Activated B cell treated with CpG ODN at 0.5 μM for 24 hours (primary cell): ENCODE measurements at regions of chr22 and their contacts with region 1.

Region 1: GRCh38 chr22:38569972-38570778 is at the start of gene DMC1:
- DNase-seq: peak; percentile 89
- ATAC-seq: peak; percentile 97
- H3K4me3 Mint-ChIP-seq: peak within 1 kb of the TSS; percentile 82
- H3K27ac Mint-ChIP-seq: peak within 1 kb of the TSS; percentile 65
- H3K4me1 Mint-ChIP-seq: peaks cover 17% of the 10 kb centered on the region
- H3K27me3 Mint-ChIP-seq: no peaks in the 10 kb centered on the region
- CTCF ChIP-seq: no peak
- total RNA-seq, gene DMC1: 0.54 and 0.91 TPM in 2 replicates

Region 2: DNA sequence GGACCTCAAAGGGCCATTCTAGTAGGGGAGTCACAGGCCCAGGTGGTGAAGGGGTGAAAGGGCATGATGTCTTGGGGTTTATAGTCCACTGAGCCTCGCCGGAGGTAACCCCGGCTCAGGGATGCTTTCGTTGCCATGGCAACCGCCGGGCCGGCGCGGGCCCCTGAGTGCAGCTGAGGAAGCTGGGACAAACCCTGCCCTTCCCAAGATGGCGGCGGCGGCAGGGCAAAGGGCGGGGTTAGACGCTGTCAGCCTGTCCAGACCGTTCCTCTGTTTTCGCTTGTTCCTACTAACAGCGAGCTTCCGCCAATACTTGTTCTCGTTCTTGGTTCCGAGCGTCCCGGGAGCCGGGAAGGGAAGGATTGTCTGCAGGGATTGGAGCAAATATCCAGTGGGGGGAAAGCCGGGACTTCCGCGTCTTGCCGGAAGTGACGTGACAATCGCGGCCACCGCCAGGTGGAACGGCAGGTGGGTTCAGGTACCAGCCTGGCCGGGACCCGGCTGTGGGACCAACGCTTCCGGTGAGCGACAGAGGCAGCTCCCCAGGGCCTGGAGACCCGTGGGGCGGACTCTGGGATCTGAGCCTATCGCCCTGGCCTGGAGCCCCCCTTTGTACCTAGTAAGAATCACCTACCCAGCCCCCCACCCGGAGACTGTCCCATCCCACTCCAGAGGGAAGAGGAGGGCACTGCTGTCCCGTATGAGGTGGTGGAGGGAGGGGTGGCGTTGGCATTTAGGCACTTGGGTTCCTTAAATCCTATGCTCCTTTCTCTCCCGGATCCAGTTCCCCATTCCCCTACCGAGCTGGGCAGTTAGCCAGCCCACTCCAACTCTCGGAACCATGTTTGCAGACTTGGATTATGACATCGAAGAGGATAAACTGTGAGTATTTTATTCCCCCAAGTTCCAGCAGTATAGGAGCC is 512.9 kb before region 1 on chr22 and contains the start of gene PICK1:
- CTCF ChIA-PET with region 1: interaction called, 77 read pairs
- POLR2A ChIA-PET with region 1: interaction called, 8 read pairs
- intact Hi-C with region 1: loop called (anchors 1 kb)
- DNase-seq: peak; percentile 75
- ATAC-seq: peak; percentile 78
- H3K4me3 Mint-ChIP-seq: peak within 1 kb of the TSS; percentile 98
- H3K27ac Mint-ChIP-seq: peak within 1 kb of the TSS; percentile 97
- H3K4me1 Mint-ChIP-seq: peaks cover 19% of the 10 kb centered on the region
- H3K27me3 Mint-ChIP-seq: peaks cover 7% of the 10 kb centered on the region
- CTCF ChIP-seq: no peak
- total RNA-seq, gene PICK1: 21.5 and 25.5 TPM in 2 replicates

Region 3: DNA sequence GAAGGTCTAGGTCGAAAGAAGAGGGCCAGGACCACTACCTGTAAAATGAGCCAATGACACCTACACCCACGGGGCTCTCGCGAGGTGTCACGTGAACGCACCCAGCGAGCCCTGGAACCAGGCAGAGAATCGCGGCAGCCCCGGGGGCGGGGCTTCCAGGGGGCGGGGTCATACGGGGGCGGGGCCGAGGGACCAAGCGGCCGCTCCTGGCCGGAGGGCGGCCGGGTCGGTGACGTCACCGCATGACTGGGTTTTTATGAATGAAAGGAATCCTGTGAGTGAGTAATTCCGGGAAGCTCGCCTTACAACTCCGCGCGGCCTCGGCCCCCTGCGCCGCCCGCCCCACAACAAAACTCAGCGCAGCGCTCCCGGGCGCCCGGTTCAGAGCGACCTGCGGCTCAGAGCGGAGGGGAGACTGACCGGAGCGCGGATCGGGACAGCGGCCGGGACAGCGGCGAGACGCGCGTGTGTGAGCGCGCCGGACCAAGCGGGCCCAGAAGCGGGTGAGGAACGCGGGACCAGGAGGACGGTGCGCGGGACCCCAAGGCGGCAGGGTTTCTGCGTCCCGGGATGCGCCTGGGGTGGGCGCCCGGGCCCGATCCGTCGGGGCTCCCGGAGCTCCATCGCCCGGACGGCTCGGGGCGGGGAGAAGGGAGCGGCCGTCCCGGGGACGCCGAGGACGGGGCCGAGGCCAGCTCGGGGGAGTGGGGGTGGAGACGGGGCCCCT is 368.3 kb before region 1 on chr22 and contains the start of gene MAFF:
- CTCF ChIA-PET with region 1: no interaction called
- POLR2A ChIA-PET with region 1: no interaction called
- intact Hi-C with region 1: loop called (anchors 5 kb)
- DNase-seq: peak; percentile 73
- ATAC-seq: peak; percentile 75
- H3K4me3 Mint-ChIP-seq: peak within 1 kb of the TSS; percentile 86
- H3K27ac Mint-ChIP-seq: peak within 1 kb of the TSS; percentile 35
- H3K4me1 Mint-ChIP-seq: peaks cover 51% of the 10 kb centered on the region
- H3K27me3 Mint-ChIP-seq: no peaks in the 10 kb centered on the region
- CTCF ChIP-seq: no peak
- total RNA-seq, gene MAFF: 2.3 and 4.5 TPM in 2 replicates

Region 4: GRCh38 chr22:38298312-38299000 is 271.7 kb before region 1 on chr22:
- CTCF ChIA-PET with region 1: no interaction called
- POLR2A ChIA-PET with region 1: no interaction called
- intact Hi-C with region 1: loop called (anchors 1 kb)
- DNase-seq: peak; percentile 37
- ATAC-seq: peak; percentile 71
- H3K4me3 Mint-ChIP-seq: no peak overlapping the region
- H3K27ac Mint-ChIP-seq: no peak overlapping the region
- H3K4me1 Mint-ChIP-seq: no peaks in the 10 kb centered on the region
- H3K27me3 Mint-ChIP-seq: no peaks in the 10 kb centered on the region
- CTCF ChIP-seq: peak; percentile 23

Region 5: DNA sequence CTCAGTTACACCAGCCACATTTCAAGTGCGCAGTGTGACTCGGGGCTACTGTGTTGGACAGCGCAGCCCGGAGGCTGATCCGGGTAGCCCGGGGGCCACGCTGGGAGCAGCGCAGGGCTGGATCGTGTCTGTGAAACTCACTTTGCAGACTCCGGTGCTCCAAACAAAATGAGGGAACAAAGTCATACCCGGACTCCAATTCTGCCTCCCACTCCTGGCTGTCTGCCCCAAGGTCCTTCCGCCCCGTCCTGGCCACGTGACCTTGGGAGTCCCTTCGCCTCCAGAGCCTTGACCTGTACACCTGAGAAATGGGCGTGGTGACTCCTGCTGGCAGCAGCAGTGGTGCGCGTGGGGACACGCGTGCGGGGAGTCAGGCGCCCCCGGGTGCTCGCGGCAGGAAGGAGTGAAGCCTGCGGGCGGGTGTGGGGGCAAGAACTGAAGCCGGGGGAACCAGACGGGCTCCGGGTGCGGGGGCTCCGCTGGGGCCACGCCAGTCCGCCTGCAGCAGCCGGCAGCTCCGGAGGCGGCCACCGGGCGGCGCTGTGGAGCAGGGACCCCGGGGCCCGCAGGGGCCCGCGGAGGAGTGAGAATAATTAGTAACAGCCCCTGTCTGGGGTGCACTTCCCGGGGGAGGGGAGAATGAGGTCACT is 157.6 kb before region 1 on chr22:
- CTCF ChIA-PET with region 1: no interaction called
- POLR2A ChIA-PET with region 1: no interaction called
- intact Hi-C with region 1: loop called (anchors 5 kb)
- DNase-seq: peak; percentile 45
- ATAC-seq: peak; percentile 56
- H3K4me3 Mint-ChIP-seq: no peak overlapping the region
- H3K27ac Mint-ChIP-seq: no peak overlapping the region
- H3K4me1 Mint-ChIP-seq: peaks cover 4% of the 10 kb centered on the region
- H3K27me3 Mint-ChIP-seq: no peaks in the 10 kb centered on the region
- CTCF ChIP-seq: no peak

Region 6: GRCh38 chr22:38484244-38484643 is 85.9 kb before region 1 on chr22:
- CTCF ChIA-PET with region 1: no interaction called
- POLR2A ChIA-PET with region 1: no interaction called
- intact Hi-C with region 1: no loop called
- DNase-seq: no peak
- ATAC-seq: no peak
- H3K4me3 Mint-ChIP-seq: no peak overlapping the region
- H3K27ac Mint-ChIP-seq: no peak overlapping the region
- H3K4me1 Mint-ChIP-seq: no peaks in the 10 kb centered on the region
- H3K27me3 Mint-ChIP-seq: no peaks in the 10 kb centered on the region
- CTCF ChIP-seq: no peak

Region 7: GRCh38 chr22:38607680-38608079 is 37.5 kb after region 1 on chr22:
- CTCF ChIA-PET with region 1: no interaction called
- POLR2A ChIA-PET with region 1: no interaction called
- intact Hi-C with region 1: no loop called
- DNase-seq: no peak
- ATAC-seq: no peak
- H3K4me3 Mint-ChIP-seq: no peak overlapping the region
- H3K27ac Mint-ChIP-seq: no peak overlapping the region
- H3K4me1 Mint-ChIP-seq: no peaks in the 10 kb centered on the region
- H3K27me3 Mint-ChIP-seq: peaks cover 12% of the 10 kb centered on the region
- CTCF ChIP-seq: no peak

Region 8: GRCh38 chr22:38705235-38706100 is 135.3 kb after region 1 on chr22 and contains the start of gene GTPBP1:
- CTCF ChIA-PET with region 1: no interaction called
- POLR2A ChIA-PET with region 1: no interaction called
- intact Hi-C with region 1: loop called (anchors 1 kb)
- DNase-seq: peak; percentile 82
- ATAC-seq: peak; percentile 79
- H3K4me3 Mint-ChIP-seq: peak within 1 kb of the TSS; percentile 88
- H3K27ac Mint-ChIP-seq: peak within 1 kb of the TSS; percentile 85
- H3K4me1 Mint-ChIP-seq: peaks cover 69% of the 10 kb centered on the region
- H3K27me3 Mint-ChIP-seq: no peaks in the 10 kb centered on the region
- CTCF ChIP-seq: no peak
- total RNA-seq, gene GTPBP1: 90.6 and 103 TPM in 2 replicates